ENCODE measurements at regions of chr19 and their contacts with region 1.

Region 1: GRCh38 chr19:10120538-10121189 is 965 bp upstream of the EIF3G start:
- DNase-seq: peak; percentile 95
- H3K4me3 ChIP-seq: peak overlapping the region; percentile 23
- H3K27ac ChIP-seq: peak overlapping the region; percentile 64
- H3K4me1 ChIP-seq: peaks cover 17% of the 10 kb centered on the region
- H3K27me3 ChIP-seq: no peaks in the 10 kb centered on the region
- CTCF ChIP-seq: no peak

Region 2: GRCh38 chr19:10074153-10074552 is 46.5 kb before region 1 on chr19:
- CTCF ChIA-PET with region 1: no interaction called
- POLR2A ChIA-PET with region 1: no interaction called
- intact Hi-C with region 1: no loop called
- DNase-seq: peak; percentile 68
- H3K4me3 ChIP-seq: no peak overlapping the region
- H3K27ac ChIP-seq: no peak overlapping the region
- H3K4me1 ChIP-seq: no peaks in the 10 kb centered on the region
- H3K27me3 ChIP-seq: no peaks in the 10 kb centered on the region
- CTCF ChIP-seq: peak; percentile 62

Region 3: GRCh38 chr19:10251792-10252694 is 131.4 kb after region 1 on chr19 and contains the start of gene MRPL4:
- CTCF ChIA-PET with region 1: interaction called, 3 read pairs
- POLR2A ChIA-PET with region 1: no interaction called
- intact Hi-C with region 1: loop called (anchors 5 kb)
- DNase-seq: peak; percentile 99
- H3K4me3 ChIP-seq: peak within 1 kb of the TSS; percentile 79
- H3K27ac ChIP-seq: peak within 1 kb of the TSS; percentile 81
- H3K4me1 ChIP-seq: peaks cover 5% of the 10 kb centered on the region
- H3K27me3 ChIP-seq: no peaks in the 10 kb centered on the region
- CTCF ChIP-seq: no peak
- total RNA-seq, gene MRPL4: 107 and 112 TPM in 2 replicates

Measured in A673 (cell line).